Endothelial cell of umbilical vein (primary cell): ENCODE measurements at regions of chr2 and their contacts with region 1.

Region 1: GRCh38 chr2:23926750-23927571 is at the start of gene ATAD2B:
- DNase-seq: peak; percentile 96
- H3K4me3 ChIP-seq: peak within 1 kb of the TSS; percentile 73 to 79 (median 78)
- H3K27ac ChIP-seq: peak within 1 kb of the TSS; percentile 82
- H3K4me1 ChIP-seq: peaks cover 23% of the 10 kb centered on the region
- H3K27me3 ChIP-seq: no peaks in the 10 kb centered on the region
- CTCF ChIP-seq: peak; percentile 85 to 89
- POLR2A ChIP-seq: peak; percentile 82
- total RNA-seq, gene ATAD2B: 19.1 and 20.0 TPM in 2 replicates

Region 2: DNA sequence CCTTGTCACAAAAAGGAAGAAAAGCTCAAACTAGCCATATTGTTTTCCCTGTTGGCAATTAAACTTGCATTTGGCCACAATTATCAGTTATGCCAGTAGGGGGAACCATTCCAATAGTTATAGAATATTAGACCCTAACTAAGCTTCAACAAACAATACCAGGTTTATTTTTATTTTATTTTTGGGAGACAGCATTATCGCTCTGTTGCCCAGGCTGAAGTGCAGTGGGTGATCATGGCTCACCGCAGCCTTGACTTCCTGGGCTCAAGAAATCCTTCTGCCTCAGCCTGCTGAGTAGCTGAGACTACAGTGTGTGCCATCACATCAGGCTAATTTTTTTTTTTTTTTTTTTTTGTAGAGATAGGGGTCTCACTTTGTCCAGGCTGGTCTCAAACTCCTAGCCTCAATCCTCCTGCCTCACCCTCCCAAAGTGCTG is 102.2 kb before region 1 on chr2:
- CTCF ChIA-PET with region 1: interaction called, 56 read pairs
- POLR2A ChIA-PET with region 1: no interaction called
- dilution Hi-C with region 1: no loop called
- intact Hi-C with region 1: loop called (anchors 1 kb)
- DNase-seq: peak; percentile 78
- H3K4me3 ChIP-seq: no peak overlapping the region
- H3K27ac ChIP-seq: no peak overlapping the region
- H3K4me1 ChIP-seq: no peaks in the 10 kb centered on the region
- H3K27me3 ChIP-seq: no peaks in the 10 kb centered on the region
- CTCF ChIP-seq: peak; percentile 51 to 57
- POLR2A ChIP-seq: no peak

Region 3: GRCh38 chr2:23993736-23994269 is 66.8 kb after region 1 on chr2:
- CTCF ChIA-PET with region 1: interaction called, 11 read pairs
- POLR2A ChIA-PET with region 1: no interaction called
- dilution Hi-C with region 1: no loop called
- intact Hi-C with region 1: no loop called
- DNase-seq: no peak
- H3K4me3 ChIP-seq: no peak overlapping the region
- H3K27ac ChIP-seq: no peak overlapping the region
- H3K4me1 ChIP-seq: no peaks in the 10 kb centered on the region
- H3K27me3 ChIP-seq: no peaks in the 10 kb centered on the region
- CTCF ChIP-seq: no peak
- POLR2A ChIP-seq: no peak

Region 4: GRCh38 chr2:24021193-24021998 is 94.4 kb after region 1 on chr2:
- CTCF ChIA-PET with region 1: interaction called, 13 read pairs
- POLR2A ChIA-PET with region 1: no interaction called
- dilution Hi-C with region 1: no loop called
- intact Hi-C with region 1: no loop called
- DNase-seq: no peak
- H3K4me3 ChIP-seq: no peak overlapping the region
- H3K27ac ChIP-seq: no peak overlapping the region
- H3K4me1 ChIP-seq: peaks cover 4% of the 10 kb centered on the region
- H3K27me3 ChIP-seq: no peaks in the 10 kb centered on the region
- CTCF ChIP-seq: peak; percentile 13 to 35
- POLR2A ChIP-seq: no peak

Region 5: DNA sequence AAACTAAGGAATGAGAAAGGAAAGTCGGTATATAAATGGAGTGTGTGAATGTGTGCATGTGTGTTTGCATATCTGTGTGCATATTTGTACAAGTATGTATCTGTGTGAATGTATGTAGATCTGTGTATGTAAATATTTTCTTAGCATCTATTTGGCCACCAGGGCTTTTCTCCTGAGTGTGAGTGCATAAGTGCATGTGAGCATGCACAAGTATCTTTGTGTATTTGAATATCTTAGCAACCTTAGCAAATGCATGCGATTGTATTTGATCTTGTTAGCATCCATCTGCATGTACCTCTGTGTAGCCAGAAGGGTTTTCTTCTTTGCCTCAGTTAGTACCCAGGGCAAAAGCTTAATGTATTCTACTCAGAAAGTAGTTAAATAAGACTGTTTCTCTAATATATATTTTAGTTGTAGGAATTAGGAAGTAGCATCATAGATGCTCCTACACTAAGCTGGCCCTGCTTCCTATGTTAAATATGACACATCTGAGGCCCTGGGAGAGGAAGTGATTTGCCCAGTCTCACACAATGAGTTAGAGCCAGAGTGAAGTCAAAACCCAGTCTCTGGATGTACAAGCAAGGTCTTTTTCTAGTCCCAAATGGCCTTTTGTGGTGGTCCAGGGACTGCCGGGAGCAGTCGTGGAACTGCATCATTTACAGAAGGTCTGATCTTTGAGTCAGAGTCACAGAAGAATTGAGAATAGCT is 131.8 kb after region 1 on chr2:
- CTCF ChIA-PET with region 1: interaction called, 18 read pairs
- POLR2A ChIA-PET with region 1: no interaction called
- dilution Hi-C with region 1: no loop called
- intact Hi-C with region 1: loop called (anchors 1 kb)
- DNase-seq: no peak
- H3K4me3 ChIP-seq: no peak overlapping the region
- H3K27ac ChIP-seq: no peak overlapping the region
- H3K4me1 ChIP-seq: no peaks in the 10 kb centered on the region
- H3K27me3 ChIP-seq: no peaks in the 10 kb centered on the region
- CTCF ChIP-seq: no peak
- POLR2A ChIP-seq: no peak

Region 6: DNA sequence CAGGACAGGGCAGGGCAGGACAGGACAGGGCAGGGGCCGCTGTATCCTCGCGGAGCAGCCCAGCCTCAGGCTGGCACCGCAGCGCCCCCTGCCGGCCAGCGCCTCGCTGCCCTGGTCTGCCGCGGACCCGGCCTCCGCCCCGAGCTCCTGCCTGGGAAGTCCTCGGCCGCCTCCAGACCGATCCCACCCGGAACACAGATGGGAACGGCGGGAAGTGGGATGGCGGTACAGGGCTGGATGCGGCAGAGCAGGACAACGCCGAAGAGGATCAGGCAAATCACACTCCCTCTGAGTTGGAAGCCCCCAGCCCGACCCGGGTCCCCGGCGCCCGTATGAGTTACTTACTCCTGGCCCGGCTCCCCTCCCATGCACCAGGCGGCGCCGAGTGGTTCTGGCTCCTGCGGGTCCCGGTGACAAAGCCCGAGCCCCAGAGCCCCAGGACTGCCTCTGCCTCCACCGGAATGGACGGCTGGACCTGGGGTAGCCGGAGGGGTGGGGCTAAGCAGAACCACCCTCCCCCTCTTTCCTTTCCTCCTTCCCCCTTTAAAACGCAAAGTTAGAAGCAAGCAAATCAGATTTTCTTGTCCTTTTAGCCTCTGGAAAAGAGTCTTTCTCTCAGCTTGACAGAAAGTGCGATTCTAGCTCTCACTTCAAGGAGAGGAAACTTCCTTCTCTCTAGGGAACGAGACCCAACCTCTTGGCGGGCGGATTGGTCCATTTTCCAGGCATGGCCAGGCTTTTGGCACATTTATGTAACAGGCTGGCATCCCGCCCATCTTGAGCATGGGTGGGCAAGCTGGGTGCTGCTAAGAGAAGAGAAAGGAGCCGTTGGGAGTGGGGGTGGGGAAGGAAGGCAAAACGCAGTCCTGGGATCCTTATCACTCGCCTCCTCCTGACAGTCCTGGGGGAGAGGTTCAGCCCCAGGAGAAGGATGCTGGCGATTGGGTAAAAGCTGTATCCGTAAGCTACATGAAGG is 157.7 kb after region 1 on chr2 and contains the start of gene TP53I3:
- CTCF ChIA-PET with region 1: interaction called, 68 read pairs
- POLR2A ChIA-PET with region 1: interaction called, 13 read pairs
- dilution Hi-C with region 1: no loop called
- intact Hi-C with region 1: loop called (anchors 1 kb)
- DNase-seq: peak; percentile 93
- H3K4me3 ChIP-seq: peak within 1 kb of the TSS; percentile 53 to 85 (median 73)
- H3K27ac ChIP-seq: peak within 1 kb of the TSS; percentile 66
- H3K4me1 ChIP-seq: peaks cover 16% of the 10 kb centered on the region
- H3K27me3 ChIP-seq: no peaks in the 10 kb centered on the region
- CTCF ChIP-seq: peak; percentile 92 to 99
- POLR2A ChIP-seq: peak; percentile 96
- total RNA-seq, gene TP53I3: 94.2 and 102 TPM in 2 replicates

Region 7: DNA sequence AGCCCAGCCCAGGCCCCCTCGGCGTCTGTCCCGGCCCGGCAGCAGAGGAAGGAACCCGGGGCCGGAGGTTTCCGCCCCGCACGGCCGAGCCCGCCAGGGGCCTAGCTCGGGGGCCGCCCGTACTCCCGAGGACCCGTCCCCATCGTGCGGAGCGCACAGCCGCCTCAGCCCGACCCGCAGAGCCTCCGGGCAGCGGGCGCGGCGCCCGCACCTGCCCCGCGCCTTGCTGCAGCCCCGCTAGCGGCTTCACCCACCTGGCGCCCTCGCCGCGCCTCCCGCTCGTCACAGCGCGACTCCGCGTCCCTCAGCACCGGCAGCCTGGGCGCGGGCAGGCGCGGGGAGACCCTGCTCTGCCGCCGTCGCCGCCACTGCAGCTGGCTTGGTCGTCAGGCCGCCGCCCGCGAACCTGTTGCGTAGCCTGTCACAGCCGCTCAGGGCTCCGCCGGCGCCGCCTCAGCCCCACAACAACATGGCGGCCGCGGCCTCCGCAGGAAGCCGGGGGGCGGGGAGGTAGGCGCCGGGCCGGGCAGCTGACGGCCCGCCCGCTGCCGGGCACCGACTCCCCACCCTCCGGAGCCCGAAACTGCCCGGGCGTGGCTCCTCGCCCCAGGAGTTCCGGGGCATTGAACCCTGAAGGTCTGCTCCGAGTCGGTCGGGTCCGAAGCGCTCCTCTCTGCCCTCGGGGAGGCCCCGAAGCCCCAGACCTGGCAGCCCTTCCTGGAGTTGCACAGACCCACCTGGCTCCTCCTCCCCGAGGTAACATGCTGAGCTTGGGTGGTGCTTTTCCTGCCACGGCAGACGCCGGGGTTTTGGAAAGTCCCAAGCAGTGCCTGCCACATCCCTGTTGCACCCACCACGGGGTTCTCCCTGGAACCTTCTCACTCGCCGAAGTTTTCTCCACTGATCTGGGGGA is 433.3 kb after region 1 on chr2 and contains the start of gene ITSN2:
- CTCF ChIA-PET with region 1: no interaction called
- POLR2A ChIA-PET with region 1: no interaction called
- dilution Hi-C with region 1: no loop called
- intact Hi-C with region 1: loop called (anchors 10 kb)
- DNase-seq: peak; percentile 78
- H3K4me3 ChIP-seq: peak within 1 kb of the TSS; percentile 81 to 97 (median 90)
- H3K27ac ChIP-seq: peak within 1 kb of the TSS; percentile 79
- H3K4me1 ChIP-seq: peaks cover 24% of the 10 kb centered on the region
- H3K27me3 ChIP-seq: no peaks in the 10 kb centered on the region
- CTCF ChIP-seq: no peak
- POLR2A ChIP-seq: peak; percentile 86
- total RNA-seq, gene ITSN2: 56.8 and 60.1 TPM in 2 replicates